Calu3 (cell line): ENCODE measurements at regions of chr12 and their contacts with region 1.

Region 1: DNA sequence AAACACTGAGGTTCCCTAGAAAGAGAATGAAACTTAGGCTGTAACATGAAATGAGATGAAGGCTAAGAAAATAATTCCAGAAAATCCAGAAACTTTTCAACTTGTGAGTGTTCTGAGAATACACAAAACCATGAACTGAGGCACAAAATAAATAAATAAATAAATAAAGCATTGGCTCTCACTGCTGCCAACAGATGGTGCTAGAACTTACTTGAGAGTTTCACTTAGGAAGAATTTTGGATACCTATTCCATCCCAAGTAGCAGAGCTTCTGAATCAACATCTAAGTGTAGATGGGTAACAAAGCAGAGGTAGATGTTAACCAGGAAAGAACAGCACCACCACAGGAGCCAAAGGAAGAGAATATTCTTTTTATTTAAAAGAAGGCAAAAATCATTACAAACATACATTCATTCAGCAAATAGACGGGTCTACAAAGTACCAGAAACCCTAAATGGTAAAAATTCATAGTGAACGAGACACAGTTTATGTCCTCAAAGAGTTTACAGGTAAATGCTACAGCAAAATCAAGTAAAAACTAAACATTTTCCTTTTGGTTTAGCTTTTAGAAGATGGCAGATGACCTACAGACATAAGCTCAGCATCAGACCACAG is 16.7 kb downstream of the EPS8 start:
- DNase-seq: no peak
- H3K4me3 Mint-ChIP-seq: no peak overlapping the region
- H3K27ac Mint-ChIP-seq: peak overlapping the region; percentile 86
- H3K4me1 Mint-ChIP-seq: peaks cover 59% of the 10 kb centered on the region
- H3K27me3 Mint-ChIP-seq: no peaks in the 10 kb centered on the region
- CTCF ChIP-seq: peak; percentile 15

Region 2: GRCh38 chr12:15735837-15736615 is 36.5 kb before region 1 on chr12:
- CTCF ChIA-PET with region 1: no interaction called
- intact Hi-C with region 1: loop called (anchors 5 kb)
- DNase-seq: no peak
- H3K4me3 Mint-ChIP-seq: no peak overlapping the region
- H3K27ac Mint-ChIP-seq: no peak overlapping the region
- H3K4me1 Mint-ChIP-seq: peaks cover 64% of the 10 kb centered on the region
- H3K27me3 Mint-ChIP-seq: no peaks in the 10 kb centered on the region
- CTCF ChIP-seq: no peak